HEK293 (cell line): ENCODE measurements at regions of chr14 and their contacts with region 1.

Region 1: GRCh38 chr14:81453166-81453766 is 53.1 kb upstream of the STON2 start:
- H3K4me3 ChIP-seq: no peak overlapping the region
- H3K27ac ChIP-seq: no peak overlapping the region
- H3K4me1 ChIP-seq: peaks cover 3% of the 10 kb centered on the region; the same call in 1 of the 2 replicates
- CTCF ChIP-seq: 0 out of 2 replicates have a peak, but pooled peaks have one; percentile 28

Region 2: GRCh38 chr14:81269100-81269978 is 183.9 kb before region 1 on chr14:
- CTCF ChIA-PET with region 1: interaction called, 169 read pairs
- POLR2A ChIA-PET with region 1: interaction called, 3 read pairs
- H3K4me3 ChIP-seq: no peak overlapping the region
- H3K27ac ChIP-seq: no peak overlapping the region
- H3K4me1 ChIP-seq: 0 out of 2 replicates have a peak, but pooled peaks cover 2% of the 10 kb centered on the region
- CTCF ChIP-seq: no peak; the same call in 1 of the 2 replicates

Region 3: GRCh38 chr14:81436296-81437138 is 16.7 kb before region 1 on chr14:
- CTCF ChIA-PET with region 1: interaction called, 11 read pairs
- POLR2A ChIA-PET with region 1: interaction called, 7 read pairs
- H3K4me3 ChIP-seq: peak overlapping the region; percentile 69
- H3K27ac ChIP-seq: peak overlapping the region; percentile 60; the same call in 1 of the 2 replicates
- H3K4me1 ChIP-seq: peaks cover 18% of the 10 kb centered on the region
- CTCF ChIP-seq: no peak

Region 4: GRCh38 chr14:81485372-81485771 is 32.1 kb after region 1 on chr14:
- CTCF ChIA-PET with region 1: no interaction called
- POLR2A ChIA-PET with region 1: no interaction called
- H3K4me3 ChIP-seq: no peak overlapping the region
- H3K27ac ChIP-seq: no peak overlapping the region
- H3K4me1 ChIP-seq: no peaks in the 10 kb centered on the region
- CTCF ChIP-seq: no peak